OCI-LY7 (cell line): ENCODE measurements at regions of chr16 and their contacts with region 1.

Region 1: GRCh38 chr16:57045694-57046381 is 46.5 kb upstream of the CPNE2 start:
- DNase-seq: peak; percentile 92
- H3K4me3 ChIP-seq: peak overlapping the region; percentile 51
- H3K27ac ChIP-seq: peak overlapping the region; percentile 98
- H3K4me1 ChIP-seq: peaks cover 76% of the 10 kb centered on the region
- CTCF ChIP-seq: peak; percentile 89

Region 2: DNA sequence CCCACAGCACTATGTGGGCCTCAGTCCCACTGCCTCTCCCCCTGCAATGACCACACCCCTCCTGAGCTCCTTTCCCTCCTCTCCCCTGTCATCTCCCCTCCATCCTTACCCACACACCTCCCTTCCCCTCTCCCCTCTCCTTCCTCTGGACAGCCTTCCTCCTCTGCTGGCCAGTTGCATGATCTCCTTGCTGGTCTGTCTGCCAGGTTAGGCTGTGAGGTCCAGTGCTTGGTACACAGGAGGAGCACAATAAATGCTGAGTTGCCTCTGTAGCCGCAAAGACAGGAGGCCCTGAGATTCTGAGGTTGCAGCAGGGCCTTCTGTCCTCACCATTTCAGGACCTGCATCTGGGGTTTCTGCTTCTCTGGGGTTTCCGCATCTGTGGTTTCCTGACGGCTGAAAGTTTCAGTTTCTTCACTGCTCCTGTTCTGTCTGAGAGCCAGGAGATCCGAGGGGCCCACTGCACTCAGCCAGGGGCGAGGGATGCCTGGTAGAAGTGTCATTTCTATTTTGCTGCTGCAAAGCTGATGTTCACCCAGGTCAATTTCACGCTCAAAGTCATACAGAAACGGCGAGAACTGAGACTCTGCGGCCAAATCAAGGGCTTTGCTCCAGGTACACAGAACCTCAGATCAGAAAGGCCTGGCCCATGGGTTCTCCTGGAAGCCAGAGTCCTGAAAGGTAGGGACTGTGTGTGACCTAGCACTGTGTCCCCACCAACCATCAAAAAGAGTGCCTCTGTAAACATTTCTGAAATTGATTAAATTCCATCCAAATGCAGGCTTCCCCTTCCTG is 185.4 kb before region 1 on chr16:
- CTCF ChIA-PET with region 1: no interaction called
- POLR2A ChIA-PET with region 1: interaction called, 3 read pairs
- intact Hi-C with region 1: loop called (anchors 5 kb)
- DNase-seq: peak; percentile 85
- H3K4me3 ChIP-seq: peak overlapping the region; percentile 48
- H3K27ac ChIP-seq: peak overlapping the region; percentile 85
- H3K4me1 ChIP-seq: peaks cover 47% of the 10 kb centered on the region
- CTCF ChIP-seq: no peak

Region 3: GRCh38 chr16:56970934-56971767 is 74.7 kb before region 1 on chr16:
- CTCF ChIA-PET with region 1: interaction called, 10 read pairs
- POLR2A ChIA-PET with region 1: interaction called, 14 read pairs
- intact Hi-C with region 1: no loop called
- DNase-seq: peak; percentile 91
- H3K4me3 ChIP-seq: no peak overlapping the region
- H3K27ac ChIP-seq: peak overlapping the region; percentile 73
- H3K4me1 ChIP-seq: peaks cover 62% of the 10 kb centered on the region
- CTCF ChIP-seq: no peak; the same call in 1 of the 2 replicates

Region 4: DNA sequence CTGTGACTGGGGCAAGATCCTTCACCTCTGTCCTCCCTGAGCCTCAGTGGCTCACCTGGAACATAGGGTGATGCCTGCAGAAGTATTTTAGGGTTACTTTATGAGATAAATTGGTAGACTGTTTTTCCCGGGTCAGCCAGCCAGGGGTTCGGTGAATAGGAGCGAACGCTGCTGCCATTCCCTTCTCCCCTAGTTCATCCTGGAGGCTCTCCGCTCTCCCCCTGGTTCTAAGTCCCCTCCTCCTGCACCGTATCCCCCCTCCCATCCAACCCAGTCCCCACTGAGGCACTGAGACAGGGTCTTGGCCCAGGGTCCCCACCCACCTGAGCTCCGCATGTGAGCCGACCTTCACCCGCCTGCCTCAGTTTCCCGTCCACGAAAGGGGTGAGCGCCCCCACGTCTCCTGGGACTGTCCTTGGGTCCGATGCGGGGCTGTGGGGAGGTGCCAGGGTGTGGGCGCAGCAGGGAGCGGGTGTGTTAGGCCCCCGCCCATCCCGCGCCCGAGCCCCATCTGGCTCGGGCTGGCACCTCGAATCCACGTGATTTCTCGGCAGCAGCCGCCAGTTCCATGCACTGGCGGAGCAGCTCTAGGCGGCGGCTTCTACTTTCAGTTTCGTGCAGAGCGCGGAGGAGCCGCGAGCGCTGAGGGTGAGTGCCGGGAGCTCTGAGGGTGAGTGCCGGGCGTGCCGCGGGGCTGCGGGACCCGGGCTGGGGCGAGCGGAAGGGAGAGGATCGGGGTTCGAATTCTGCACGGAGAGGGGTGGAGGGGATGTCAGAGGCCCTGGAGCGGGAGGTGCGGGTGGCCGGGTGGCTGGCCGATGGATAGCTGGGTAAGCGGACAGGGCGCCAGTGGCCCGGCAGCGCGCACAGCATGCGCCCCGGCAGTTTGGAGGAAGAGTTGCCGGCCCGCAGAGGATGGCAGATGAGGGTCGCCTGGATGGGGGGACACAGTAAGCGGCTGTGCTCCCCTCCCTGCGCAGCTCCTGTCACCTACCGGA is 56.6 kb before region 1 on chr16 and contains the start of gene NLRC5:
- CTCF ChIA-PET with region 1: interaction called, 6 read pairs
- POLR2A ChIA-PET with region 1: interaction called, 22 read pairs
- intact Hi-C with region 1: loop called (anchors 1 kb)
- DNase-seq: peak; percentile 93
- H3K4me3 ChIP-seq: peak within 1 kb of the TSS; percentile 80
- H3K27ac ChIP-seq: peak within 1 kb of the TSS; percentile 80
- H3K4me1 ChIP-seq: peaks cover 79% of the 10 kb centered on the region
- CTCF ChIP-seq: no peak
- total RNA-seq, gene NLRC5: 156 and 199 TPM in 2 replicates

Region 5: DNA sequence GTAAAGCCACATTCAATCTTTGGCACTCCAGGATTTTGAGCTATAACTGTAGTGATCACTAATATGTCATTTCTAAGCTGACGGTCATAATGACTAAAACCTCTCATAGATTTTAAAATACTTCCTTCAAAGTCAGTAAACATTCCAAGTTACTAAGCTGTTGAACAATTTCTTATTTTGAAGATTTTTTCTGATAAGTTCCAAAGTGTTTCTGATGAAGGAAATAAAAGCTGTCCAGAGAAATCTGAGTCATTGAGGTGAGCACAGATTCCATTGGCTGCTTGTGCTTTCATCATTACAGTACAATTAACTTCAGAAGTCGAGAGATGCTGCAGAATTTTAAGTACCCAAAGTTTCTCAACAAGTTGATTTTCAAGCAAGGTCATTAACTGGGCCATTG is 32.6 kb before region 1 on chr16:
- CTCF ChIA-PET with region 1: interaction called, 4 read pairs
- POLR2A ChIA-PET with region 1: interaction called, 76 read pairs
- intact Hi-C with region 1: no loop called
- DNase-seq: no peak
- H3K4me3 ChIP-seq: no peak overlapping the region
- H3K27ac ChIP-seq: peak overlapping the region; percentile 48
- H3K4me1 ChIP-seq: peaks cover 59% of the 10 kb centered on the region
- CTCF ChIP-seq: no peak

Region 6: DNA sequence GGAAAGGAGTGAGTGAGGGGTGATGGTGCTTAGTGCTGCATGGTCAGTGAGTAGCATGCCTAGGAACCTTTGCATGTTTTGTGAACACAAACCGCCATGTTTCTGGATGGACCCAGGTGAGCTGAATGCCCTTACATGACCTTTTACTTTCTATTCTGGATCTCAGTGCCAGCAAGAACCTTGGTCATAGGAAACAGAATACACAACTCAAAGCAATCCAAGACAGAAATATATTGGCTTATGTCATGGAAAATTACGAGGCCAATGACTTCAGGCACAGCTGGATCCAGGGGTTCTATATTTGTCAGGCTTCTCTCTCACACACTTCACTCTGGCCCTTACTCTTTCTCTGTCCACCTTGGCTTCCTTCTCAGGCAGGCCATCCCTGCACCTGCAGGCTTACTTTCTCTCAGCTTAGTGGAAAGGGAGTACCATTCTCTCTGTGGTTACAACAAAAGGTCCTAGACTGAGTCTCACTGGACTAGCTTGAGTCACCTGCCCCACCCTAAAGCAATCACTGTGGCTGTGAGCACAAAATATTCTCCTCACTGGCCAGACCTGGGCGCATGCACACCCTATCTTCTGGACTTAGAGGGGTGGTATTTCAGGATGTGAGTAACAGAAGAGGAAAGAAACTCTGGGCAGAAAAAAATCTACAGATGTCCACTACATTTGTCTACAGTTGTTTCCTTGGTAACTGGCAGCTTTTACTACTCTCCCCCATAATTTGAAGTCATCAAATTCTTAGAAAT is 26.2 kb after region 1 on chr16:
- CTCF ChIA-PET with region 1: no interaction called
- POLR2A ChIA-PET with region 1: no interaction called
- intact Hi-C with region 1: no loop called
- DNase-seq: no peak
- H3K4me3 ChIP-seq: no peak overlapping the region
- H3K27ac ChIP-seq: no peak overlapping the region
- H3K4me1 ChIP-seq: no peaks in the 10 kb centered on the region
- CTCF ChIP-seq: no peak